Naive thymus-derived CD4-positive, alpha-beta T cell (primary cell): ENCODE measurements at regions of chr2 and their contacts with region 1.

Region 1: GRCh38 chr2:234425619-234426603 is 71.0 kb downstream of the ARL4C start:
- DNase-seq: peak; percentile 53 to 93 (median 92)
- ATAC-seq: peak; percentile 84
- H3K4me3 ChIP-seq: peak overlapping the region; percentile 43
- H3K4me3 Mint-ChIP-seq: peak overlapping the region; percentile 73 to 87 (median 82)
- H3K27ac ChIP-seq: peak overlapping the region; percentile 93
- H3K27ac Mint-ChIP-seq: peak overlapping the region; percentile 97 to 100 (median 100)
- H3K4me1 ChIP-seq: peaks cover 86 to 92% of the 10 kb centered on the region in 2 donors
- H3K4me1 Mint-ChIP-seq: peaks cover 70 to 100% (median 91%) of the 10 kb centered on the region in 7 donors
- H3K27me3 ChIP-seq: no peaks in the 10 kb centered on the region
- H3K27me3 Mint-ChIP-seq: no peaks in the 10 kb centered on the region

Region 2: GRCh38 chr2:234218266-234219180 is 207.4 kb before region 1 on chr2:
- CTCF ChIA-PET with region 1: no interaction called
- POLR2A ChIA-PET with region 1: no interaction called
- intact Hi-C with region 1: no loop called
- DNase-seq: peak in 5 of 9 donors; percentile 20 to 34 (median 30)
- ATAC-seq: peak; percentile 26
- H3K4me3 ChIP-seq: no peak overlapping the region
- H3K4me3 Mint-ChIP-seq: peak overlapping the region in 9 of 10 donors; percentile 29 to 76 (median 62)
- H3K27ac ChIP-seq: no peak overlapping the region
- H3K27ac Mint-ChIP-seq: peak overlapping the region in 6 of 9 donors; percentile 9 to 81 (median 34)
- H3K4me1 ChIP-seq: peaks cover 25 to 36% of the 10 kb centered on the region in 2 donors
- H3K4me1 Mint-ChIP-seq: peaks cover 26 to 59% (median 53%) of the 10 kb centered on the region in 7 donors
- H3K27me3 ChIP-seq: no peaks in the 10 kb centered on the region
- H3K27me3 Mint-ChIP-seq: no peaks in the 10 kb centered on the region

Region 3: GRCh38 chr2:234308813-234309195 is 117.1 kb before region 1 on chr2:
- CTCF ChIA-PET with region 1: no interaction called
- POLR2A ChIA-PET with region 1: interaction called, 10 read pairs
- intact Hi-C with region 1: loop called (anchors 1 kb)
- DNase-seq: peak; percentile 28 to 87 (median 82)
- ATAC-seq: peak; percentile 94
- H3K4me3 ChIP-seq: no peak overlapping the region
- H3K4me3 Mint-ChIP-seq: peak overlapping the region; percentile 21 to 84 (median 70)
- H3K27ac ChIP-seq: peak overlapping the region; percentile 65
- H3K27ac Mint-ChIP-seq: peak overlapping the region; percentile 77 to 98 (median 93)
- H3K4me1 ChIP-seq: peaks cover 6 to 21% of the 10 kb centered on the region in 2 donors
- H3K4me1 Mint-ChIP-seq: peaks cover 20 to 71% (median 41%) of the 10 kb centered on the region in 7 donors
- H3K27me3 ChIP-seq: no peaks in the 10 kb centered on the region
- H3K27me3 Mint-ChIP-seq: no peaks in the 10 kb centered on the region

Region 4: DNA sequence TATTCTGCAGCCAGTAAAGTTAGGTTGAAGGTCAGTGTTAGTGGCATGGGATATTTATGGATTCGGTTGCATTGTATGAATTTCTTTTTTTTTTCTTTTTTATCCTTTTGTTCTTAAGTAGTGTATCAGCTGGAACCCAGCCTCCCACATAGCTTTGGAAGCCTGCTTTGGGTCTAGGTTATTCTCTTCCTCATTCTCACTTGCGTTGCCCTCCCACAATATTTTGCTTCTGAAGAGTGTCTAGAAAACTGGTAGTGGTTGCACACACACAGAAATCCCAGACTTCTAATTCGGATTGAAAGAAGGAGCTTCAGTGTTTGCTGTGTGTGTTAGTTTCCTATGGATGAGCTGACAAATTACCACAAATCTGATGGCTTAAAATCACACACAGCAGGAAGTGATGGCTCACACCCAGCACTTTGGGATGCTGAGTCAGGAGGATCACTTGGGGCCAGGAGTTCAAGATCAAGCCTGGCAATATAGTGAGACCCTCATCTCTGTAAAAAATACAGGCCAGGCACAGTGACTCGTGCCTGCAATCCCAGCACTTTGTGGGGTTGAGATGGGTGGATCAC is 33.8 kb before region 1 on chr2:
- CTCF ChIA-PET with region 1: interaction called, 4 read pairs
- POLR2A ChIA-PET with region 1: interaction called, 7 read pairs
- intact Hi-C with region 1: loop called in 1 of 2 experiments (anchors 1 kb)
- DNase-seq: no peak
- ATAC-seq: no peak
- H3K4me3 ChIP-seq: no peak overlapping the region
- H3K4me3 Mint-ChIP-seq: peak overlapping the region in 9 of 10 donors; percentile 35 to 84 (median 46)
- H3K27ac ChIP-seq: peak overlapping the region; percentile 53
- H3K27ac Mint-ChIP-seq: peak overlapping the region; percentile 17 to 98 (median 94)
- H3K4me1 ChIP-seq: peaks cover 21 to 53% of the 10 kb centered on the region in 2 donors
- H3K4me1 Mint-ChIP-seq: peaks cover 34 to 73% (median 65%) of the 10 kb centered on the region in 7 donors
- H3K27me3 ChIP-seq: no peaks in the 10 kb centered on the region
- H3K27me3 Mint-ChIP-seq: no peaks in the 10 kb centered on the region

Region 5: GRCh38 chr2:234437642-234438304 is 11.9 kb after region 1 on chr2:
- CTCF ChIA-PET with region 1: interaction called, 4 read pairs
- POLR2A ChIA-PET with region 1: interaction called, 643 read pairs
- intact Hi-C with region 1: loop called (anchors 1 kb)
- DNase-seq: no peak
- ATAC-seq: no peak
- H3K4me3 ChIP-seq: peak overlapping the region; percentile 46
- H3K4me3 Mint-ChIP-seq: peak overlapping the region; percentile 15 to 81 (median 73)
- H3K27ac ChIP-seq: peak overlapping the region; percentile 75
- H3K27ac Mint-ChIP-seq: peak overlapping the region; percentile 64 to 100 (median 95)
- H3K4me1 ChIP-seq: peaks cover 9 to 74% of the 10 kb centered on the region in 2 donors
- H3K4me1 Mint-ChIP-seq: peaks cover 54 to 98% (median 89%) of the 10 kb centered on the region in 7 donors
- H3K27me3 ChIP-seq: no peaks in the 10 kb centered on the region
- H3K27me3 Mint-ChIP-seq: no peaks in the 10 kb centered on the region

Region 6: DNA sequence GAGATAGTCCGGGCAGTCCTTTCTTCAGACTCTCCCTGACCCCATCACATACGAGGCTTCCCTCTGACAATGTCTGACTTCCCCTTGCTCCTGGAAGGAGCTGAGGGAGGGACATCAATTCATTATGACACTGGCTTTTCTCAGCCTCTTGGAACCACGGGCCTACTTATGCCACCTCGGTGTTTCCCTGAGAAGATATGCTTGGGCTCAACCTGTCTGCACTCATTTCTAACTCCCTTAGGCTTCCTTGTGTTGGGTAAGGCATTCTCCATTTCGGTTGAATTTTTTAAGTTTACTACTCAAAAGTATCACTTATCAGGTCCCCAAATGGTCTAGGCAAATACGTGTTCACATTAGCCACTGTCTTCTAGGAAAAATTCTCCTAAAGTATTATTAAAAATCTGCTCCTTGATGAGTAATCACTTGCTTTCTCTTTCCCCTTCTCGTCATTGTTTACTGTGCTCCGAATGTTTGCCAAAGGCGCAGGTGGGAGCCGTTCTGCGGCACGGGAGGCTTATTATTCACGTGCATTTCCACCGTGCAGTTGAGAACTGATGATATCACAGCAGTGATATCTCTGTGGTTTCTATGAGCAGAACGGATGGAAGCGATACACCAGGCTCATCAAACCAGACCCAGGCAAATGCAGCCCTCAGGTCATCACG is 37.8 kb after region 1 on chr2:
- CTCF ChIA-PET with region 1: interaction called, 9 read pairs
- POLR2A ChIA-PET with region 1: interaction called, 643 read pairs
- intact Hi-C with region 1: loop called (anchors 1 kb)
- DNase-seq: peak; percentile 36 to 91 (median 87)
- ATAC-seq: peak; percentile 93
- H3K4me3 ChIP-seq: peak overlapping the region; percentile 26
- H3K4me3 Mint-ChIP-seq: peak overlapping the region; percentile 45 to 84 (median 76)
- H3K27ac ChIP-seq: peak overlapping the region; percentile 93
- H3K27ac Mint-ChIP-seq: peak overlapping the region; percentile 94 to 100 (median 96)
- H3K4me1 ChIP-seq: peaks cover 60 to 63% of the 10 kb centered on the region in 2 donors
- H3K4me1 Mint-ChIP-seq: peaks cover 49 to 97% (median 79%) of the 10 kb centered on the region in 7 donors
- H3K27me3 ChIP-seq: no peaks in the 10 kb centered on the region
- H3K27me3 Mint-ChIP-seq: no peaks in the 10 kb centered on the region

Region 7: DNA sequence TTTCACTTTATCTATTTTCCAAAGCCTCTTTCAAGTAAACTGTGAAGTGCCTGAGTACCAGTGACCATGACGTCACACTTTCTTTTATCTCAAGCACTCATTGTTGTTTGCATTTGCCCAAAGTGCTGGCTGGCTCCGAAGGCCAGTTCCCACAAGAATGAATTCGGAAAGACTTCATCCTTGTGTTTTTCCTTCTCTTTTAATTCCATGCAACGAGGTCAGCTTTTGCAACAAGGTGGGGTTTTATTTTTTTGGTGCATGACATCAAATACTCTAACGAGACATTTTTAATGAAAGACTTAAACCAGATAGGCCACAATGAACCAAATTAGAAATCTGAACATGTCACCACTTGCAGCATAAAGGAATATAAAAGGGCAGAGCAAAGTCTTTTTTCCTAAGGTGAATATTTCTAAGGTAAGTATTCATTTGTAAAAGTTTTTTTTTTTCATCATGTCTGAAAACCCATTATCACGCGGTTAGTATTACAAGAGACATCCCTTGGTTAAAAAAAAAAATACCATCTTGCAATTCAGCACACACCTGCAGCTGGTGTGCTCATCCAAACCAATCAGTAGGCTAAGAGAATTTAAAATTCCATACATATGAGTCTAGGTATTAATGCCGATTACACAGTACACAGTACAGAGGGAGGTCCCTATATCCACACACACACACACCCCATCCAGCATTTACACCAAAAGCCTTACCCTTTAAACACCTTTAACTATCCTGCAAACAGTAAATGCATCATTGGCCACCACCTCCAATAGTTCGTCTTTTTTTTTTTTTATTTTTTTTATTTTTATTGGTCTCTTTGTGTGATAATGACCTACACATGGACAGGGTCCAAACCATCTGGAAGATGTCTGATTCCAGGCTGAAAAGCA is 68.7 kb after region 1 on chr2:
- CTCF ChIA-PET with region 1: interaction called, 7 read pairs
- POLR2A ChIA-PET with region 1: interaction called, 99 read pairs
- intact Hi-C with region 1: loop called (anchors 1 kb)
- DNase-seq: peak in 7 of 9 donors; percentile 51 to 67 (median 57)
- ATAC-seq: peak; percentile 14
- H3K4me3 ChIP-seq: peak overlapping the region; percentile 95
- H3K4me3 Mint-ChIP-seq: peak overlapping the region; percentile 96 to 100 (median 98)
- H3K27ac ChIP-seq: peak overlapping the region; percentile 94
- H3K27ac Mint-ChIP-seq: peak overlapping the region; percentile 91 to 100 (median 98)
- H3K4me1 ChIP-seq: peaks cover 34 to 46% of the 10 kb centered on the region in 2 donors
- H3K4me1 Mint-ChIP-seq: peaks cover 26 to 50% (median 43%) of the 10 kb centered on the region in 7 donors
- H3K27me3 ChIP-seq: no peaks in the 10 kb centered on the region
- H3K27me3 Mint-ChIP-seq: peaks cover 0 to 5% (median 0%) of the 10 kb centered on the region in 5 donors

Region 8: DNA sequence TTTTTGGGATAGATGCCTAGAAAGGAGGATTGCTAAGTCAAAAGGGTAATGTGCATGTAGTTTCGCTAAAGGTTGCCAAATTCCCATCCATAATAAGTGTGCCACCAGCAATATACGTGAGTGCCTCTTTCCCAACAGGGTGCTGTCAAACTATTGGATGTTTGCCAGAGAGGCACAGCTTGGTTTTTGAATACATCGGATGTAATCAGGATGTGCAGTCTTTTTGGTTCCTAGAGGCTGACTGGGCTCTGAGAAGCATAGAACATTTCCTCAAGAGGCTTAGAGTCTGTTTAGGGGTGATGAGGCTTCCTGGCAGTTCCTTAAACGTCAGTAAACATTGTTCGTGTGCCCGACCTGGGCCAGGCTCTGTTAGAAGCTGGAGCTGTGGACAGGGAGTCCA is 1095.9 kb after region 1 on chr2:
- CTCF ChIA-PET with region 1: no interaction called
- POLR2A ChIA-PET with region 1: no interaction called
- intact Hi-C with region 1: no loop called
- DNase-seq: no peak
- ATAC-seq: no peak
- H3K4me3 ChIP-seq: no peak overlapping the region
- H3K4me3 Mint-ChIP-seq: no peak overlapping the region
- H3K27ac ChIP-seq: no peak overlapping the region
- H3K27ac Mint-ChIP-seq: no peak overlapping the region
- H3K4me1 ChIP-seq: no peaks in the 10 kb centered on the region
- H3K4me1 Mint-ChIP-seq: peaks cover 0 to 2% (median 0%) of the 10 kb centered on the region in 7 donors
- H3K27me3 ChIP-seq: no peaks in the 10 kb centered on the region
- H3K27me3 Mint-ChIP-seq: peaks cover 0 to 36% (median 14%) of the 10 kb centered on the region in 5 donors